ENCODE measurements at regions of chr22 and their contacts with region 1.

Region 1: GRCh38 chr22:40636380-40637182 is at the start of gene MRTFA:
- DNase-seq: peak; percentile 100

Region 2: DNA sequence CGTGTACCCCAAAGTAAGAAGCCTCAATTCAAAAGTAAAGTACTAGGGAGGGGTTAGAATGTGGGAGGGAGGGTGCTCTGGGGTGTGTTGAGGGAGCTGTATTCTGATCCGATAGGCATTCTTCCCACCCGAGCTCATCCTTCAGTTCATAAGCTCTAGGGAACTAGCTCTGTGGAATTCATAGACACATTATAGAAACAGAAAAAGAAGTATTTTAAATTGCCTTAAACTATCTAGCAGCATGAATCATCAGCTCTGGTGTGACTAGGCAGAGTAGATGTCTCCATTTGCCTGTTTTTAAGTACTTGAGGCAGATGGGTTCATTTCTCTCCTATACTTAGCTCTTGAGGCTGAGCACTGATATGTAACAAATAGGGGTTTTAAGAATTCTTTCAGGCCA is 273.5 kb before region 1 on chr22:
- intact Hi-C with region 1: loop called (anchors 10 kb)
- DNase-seq: peak in 12 of 42 donors; percentile 16 to 76 (median 32)

Region 3: GRCh38 chr22:40533712-40534378 is 102.7 kb before region 1 on chr22:
- intact Hi-C with region 1: loop called (anchors 5 kb)
- DNase-seq: peak in 10 of 42 donors; percentile 5 to 54 (median 24)

Region 4: GRCh38 chr22:40560551-40560950 is 76.0 kb before region 1 on chr22:
- intact Hi-C with region 1: no loop called
- DNase-seq: no peak

Region 5: DNA sequence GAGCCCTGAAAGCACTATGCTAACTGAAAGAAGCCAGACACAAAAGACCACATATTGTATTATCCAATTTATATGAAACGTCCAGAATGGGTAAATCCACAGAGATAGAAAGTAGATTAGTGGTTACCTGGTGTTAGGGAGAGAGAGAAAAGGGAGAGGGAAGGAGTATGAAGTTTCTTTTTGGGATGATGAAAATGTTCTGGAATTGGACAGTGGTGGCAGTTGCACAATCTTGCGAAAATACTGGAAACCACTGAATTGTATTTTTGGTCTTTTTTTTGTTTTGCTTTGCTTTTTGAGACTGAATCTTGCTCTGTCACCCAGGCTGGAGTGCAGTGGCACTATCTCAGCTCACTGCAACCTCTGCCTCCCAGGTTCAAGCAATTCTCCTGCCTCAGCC is 63.6 kb before region 1 on chr22:
- intact Hi-C with region 1: no loop called
- DNase-seq: no peak

Region 6: GRCh38 chr22:40714192-40714951 is 77.8 kb after region 1 on chr22:
- intact Hi-C with region 1: no loop called
- DNase-seq: peak in 16 of 42 donors; percentile 5 to 47 (median 22)

Measured in head of caudate nucleus (tissue), 42 donors.